SK-N-SH (cell line): ENCODE measurements at regions of chr4 and their contacts with region 1.

Region 1: DNA sequence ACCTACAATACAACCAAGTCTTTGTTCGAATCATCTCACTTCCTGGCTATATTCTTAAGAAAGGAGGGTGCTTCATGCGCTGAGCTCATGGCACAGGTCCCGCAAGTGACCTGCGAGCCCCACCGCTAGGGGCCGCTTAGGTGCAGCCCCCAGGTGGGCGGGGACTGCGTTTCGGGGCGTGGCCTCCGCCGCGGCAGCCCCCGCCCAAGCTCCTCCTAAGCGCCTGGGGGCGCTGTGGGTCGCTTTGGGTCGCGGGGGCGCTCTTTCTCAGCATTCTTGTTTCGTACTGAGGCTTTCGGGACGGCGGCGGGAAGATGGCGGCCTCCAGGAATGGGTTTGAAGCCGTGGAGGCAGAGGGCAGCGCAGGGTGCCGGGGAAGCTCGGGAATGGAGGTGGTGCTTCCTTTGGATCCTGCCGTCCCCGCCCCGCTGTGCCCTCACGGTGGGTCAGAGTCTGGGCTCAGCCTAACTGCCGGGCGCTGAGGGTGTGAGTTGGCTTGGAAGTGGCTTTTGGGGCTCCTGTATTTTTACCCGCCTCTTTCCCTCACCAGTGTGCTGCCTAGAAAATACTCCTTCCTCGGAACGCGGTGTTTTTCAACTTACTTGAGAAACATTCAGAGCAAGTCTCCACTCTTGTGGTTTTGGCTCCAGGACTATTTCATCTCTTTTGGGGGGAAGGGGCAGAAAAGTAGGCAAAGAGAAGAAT is at the start of gene ZCCHC4:
- DNase-seq: peak; percentile 94
- H3K4me3 ChIP-seq: peak within 1 kb of the TSS; percentile 79 to 80
- H3K27ac ChIP-seq: peak within 1 kb of the TSS; percentile 75 to 77
- H3K4me1 ChIP-seq: peaks cover 3 to 5% of the 10 kb centered on the region in 2 experiments; a peak in 2 of 4 replicates
- H3K27me3 ChIP-seq: no peaks in the 10 kb centered on the region
- CTCF ChIP-seq: peak; percentile 99
- EP300 ChIP-seq: peak in 1 of 2 experiments; percentile 61; a peak in 1 of 4 replicates
- RAD21 ChIP-seq: peak; percentile 25
- polyA plus RNA-seq, gene ZCCHC4: 4.8 and 7.5 TPM in 2 replicates

Region 2: GRCh38 chr4:25221377-25221776 is 91.3 kb before region 1 on chr4:
- CTCF ChIA-PET with region 1: no interaction called
- POLR2A ChIA-PET with region 1: no interaction called
- DNase-seq: no peak
- H3K4me3 ChIP-seq: no peak overlapping the region
- H3K27ac ChIP-seq: no peak overlapping the region
- H3K4me1 ChIP-seq: no peaks in the 10 kb centered on the region
- H3K27me3 ChIP-seq: no peaks in the 10 kb centered on the region
- CTCF ChIP-seq: no peak
- EP300 ChIP-seq: no peak
- RAD21 ChIP-seq: no peak

Region 3: DNA sequence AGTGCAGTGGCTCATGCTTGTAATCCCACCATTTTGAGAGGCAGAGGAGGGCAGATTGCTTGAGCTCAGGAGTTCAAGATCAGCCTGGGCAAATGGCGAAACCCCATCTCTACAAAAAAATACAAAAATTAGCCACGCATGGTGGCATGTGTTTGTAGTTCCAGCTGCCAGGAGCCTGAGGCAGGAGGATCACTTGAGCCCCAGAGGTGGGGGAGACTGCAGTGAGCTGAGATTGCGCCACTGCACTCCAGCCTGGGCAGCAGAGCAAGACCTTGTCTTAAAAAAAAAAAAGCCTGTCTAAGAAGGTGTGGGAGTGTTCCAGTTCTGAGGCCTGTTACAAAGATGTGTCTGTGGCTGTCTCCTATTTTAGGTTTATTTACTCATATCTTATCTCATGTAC is 40.8 kb before region 1 on chr4:
- CTCF ChIA-PET with region 1: interaction called, 14 read pairs
- POLR2A ChIA-PET with region 1: no interaction called
- DNase-seq: no peak
- H3K4me3 ChIP-seq: no peak overlapping the region
- H3K27ac ChIP-seq: no peak overlapping the region
- H3K4me1 ChIP-seq: no peaks in the 10 kb centered on the region
- H3K27me3 ChIP-seq: no peaks in the 10 kb centered on the region
- CTCF ChIP-seq: no peak
- EP300 ChIP-seq: no peak
- RAD21 ChIP-seq: no peak

Region 4: GRCh38 chr4:25299480-25300188 is 13.0 kb before region 1 on chr4:
- CTCF ChIA-PET with region 1: interaction called, 43 read pairs
- POLR2A ChIA-PET with region 1: no interaction called
- DNase-seq: no peak
- H3K4me3 ChIP-seq: no peak overlapping the region
- H3K27ac ChIP-seq: no peak overlapping the region
- H3K4me1 ChIP-seq: no peaks in the 10 kb centered on the region
- H3K27me3 ChIP-seq: peaks cover 4% of the 10 kb centered on the region; the same call in 1 of the 2 replicates
- CTCF ChIP-seq: no peak
- EP300 ChIP-seq: no peak
- RAD21 ChIP-seq: no peak

Region 5: DNA sequence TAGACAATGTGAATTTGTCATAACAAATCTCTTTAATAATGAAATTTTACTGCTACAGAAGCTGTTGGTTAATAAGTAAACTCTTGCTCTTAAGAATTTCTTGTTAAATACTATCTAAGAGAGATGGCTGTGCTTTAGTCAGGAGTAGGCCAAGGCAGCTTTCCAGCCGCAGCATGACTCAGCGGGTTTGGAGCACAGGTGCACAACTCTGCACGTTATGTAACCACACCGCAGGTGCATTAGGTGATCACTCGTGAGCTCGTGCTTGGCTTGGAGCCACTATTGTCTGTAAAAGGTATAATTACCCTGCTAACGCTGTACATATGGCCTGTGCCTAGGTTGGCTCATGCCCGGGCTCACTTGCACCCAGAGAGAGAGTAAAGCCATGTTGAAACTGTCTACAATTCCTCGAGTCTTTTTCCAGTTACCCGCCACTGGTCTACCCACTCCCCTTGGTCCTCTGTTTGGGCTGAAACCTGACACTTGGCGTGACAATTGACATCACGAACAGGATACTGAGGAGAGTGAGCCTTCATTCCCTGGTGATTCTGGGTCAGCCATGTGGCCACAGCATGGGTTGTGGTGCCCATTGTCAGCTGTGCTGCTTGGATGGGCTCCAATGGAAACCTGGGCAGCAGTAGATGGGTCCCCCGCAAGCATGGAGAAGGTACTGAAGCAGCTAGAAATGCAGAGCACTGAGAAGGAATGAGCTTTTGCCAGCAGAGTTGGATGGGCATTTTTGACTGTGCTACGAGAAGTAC is 46.0 kb after region 1 on chr4:
- CTCF ChIA-PET with region 1: interaction called, 11 read pairs
- POLR2A ChIA-PET with region 1: no interaction called
- DNase-seq: no peak
- H3K4me3 ChIP-seq: no peak overlapping the region
- H3K27ac ChIP-seq: no peak overlapping the region
- H3K4me1 ChIP-seq: no peaks in the 10 kb centered on the region
- H3K27me3 ChIP-seq: no peaks in the 10 kb centered on the region
- CTCF ChIP-seq: no peak
- EP300 ChIP-seq: no peak
- RAD21 ChIP-seq: no peak

Region 6: DNA sequence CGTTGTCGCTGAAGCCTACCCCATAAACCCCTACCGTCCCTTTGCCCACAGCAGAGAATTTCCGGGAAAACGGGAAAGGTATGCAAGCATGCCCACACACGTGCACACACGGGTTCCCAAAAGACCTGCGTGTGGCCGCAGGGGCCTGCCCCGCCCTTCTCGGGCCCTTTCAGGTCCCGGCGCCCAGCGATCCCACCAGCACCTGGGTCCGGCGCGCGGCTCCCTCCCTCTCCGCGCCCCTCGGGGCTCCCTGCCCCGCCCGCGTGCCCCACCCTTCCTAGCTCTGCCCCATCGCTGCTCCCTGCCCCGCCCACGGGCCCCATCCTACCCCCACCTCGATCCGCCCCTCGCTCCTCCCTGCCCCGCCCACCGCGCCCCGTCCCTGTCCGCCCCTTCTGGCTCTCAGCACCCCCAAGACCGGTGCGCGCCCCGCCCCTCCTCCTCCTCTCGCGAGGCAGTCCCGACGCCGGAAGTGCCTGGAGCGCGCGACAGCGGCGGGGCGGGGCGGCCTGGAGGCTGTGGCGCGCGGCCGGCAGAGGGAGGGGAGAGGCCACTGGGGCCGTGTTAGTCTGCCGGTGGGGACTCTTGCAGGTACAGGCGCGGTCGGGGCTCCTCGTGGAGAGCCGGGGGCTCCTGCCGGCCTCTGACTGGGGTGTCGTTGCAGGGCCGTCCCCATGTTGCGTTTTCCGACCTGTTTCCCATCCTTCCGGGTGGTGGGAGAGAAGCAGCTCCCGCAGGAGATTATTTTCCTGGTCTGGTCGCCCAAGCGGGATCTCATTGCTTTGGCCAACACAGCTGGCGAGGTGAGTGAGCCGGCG is 64.3 kb after region 1 on chr4 and contains the start of gene ANAPC4:
- CTCF ChIA-PET with region 1: interaction called, 14 read pairs
- POLR2A ChIA-PET with region 1: interaction called, 9 read pairs
- DNase-seq: peak; percentile 98
- H3K4me3 ChIP-seq: peak within 1 kb of the TSS; percentile 71 to 95
- H3K27ac ChIP-seq: peak within 1 kb of the TSS; percentile 34 to 80
- H3K4me1 ChIP-seq: peaks cover 0 to 15% of the 10 kb centered on the region in 2 experiments; a peak in 2 of 4 replicates
- H3K27me3 ChIP-seq: no peaks in the 10 kb centered on the region
- CTCF ChIP-seq: no peak
- EP300 ChIP-seq: no peak
- RAD21 ChIP-seq: no peak
- polyA plus RNA-seq, gene ANAPC4: 7.7 and 11.7 TPM in 2 replicates

Region 7: DNA sequence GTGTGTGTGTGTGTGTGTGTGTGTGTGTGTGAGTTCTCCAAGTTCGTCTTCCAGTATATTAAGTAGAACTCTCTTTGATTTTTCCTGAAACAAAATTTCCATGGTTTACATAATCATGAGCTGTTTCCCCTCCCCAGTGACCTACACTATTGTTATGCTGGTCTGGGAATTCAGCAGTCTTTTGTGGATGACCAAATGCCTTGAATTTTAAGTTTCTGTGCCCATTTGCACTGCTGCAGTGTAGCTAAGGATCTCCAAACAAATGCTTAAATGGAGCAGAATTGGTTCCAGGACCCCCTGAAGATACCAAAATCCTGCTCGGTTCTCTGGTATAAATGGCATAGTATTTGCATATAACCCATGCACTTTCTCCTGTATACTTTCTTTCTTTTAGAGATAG is 265.8 kb after region 1 on chr4:
- CTCF ChIA-PET with region 1: no interaction called
- POLR2A ChIA-PET with region 1: no interaction called
- DNase-seq: no peak
- H3K4me3 ChIP-seq: no peak overlapping the region
- H3K27ac ChIP-seq: no peak overlapping the region
- H3K4me1 ChIP-seq: no peaks in the 10 kb centered on the region
- H3K27me3 ChIP-seq: no peaks in the 10 kb centered on the region; the same call in 1 of the 2 replicates
- CTCF ChIP-seq: no peak
- EP300 ChIP-seq: no peak
- RAD21 ChIP-seq: no peak